Activated CD8-positive, alpha-beta T cell treated with anti-CD3 and anti-CD28 coated beads, Interleukin-2, amount 10 ng/mL, durations not matched to agents 7 days and 5 days (primary cell): ENCODE measurements at regions of chr2 and their contacts with region 1.

Region 1: GRCh38 chr2:127280693-127281092 is 13.3 kb downstream of the ERCC3 start:
- DNase-seq: no peak
- ATAC-seq: no peak
- H3K4me3 Mint-ChIP-seq: no peak overlapping the region
- H3K27ac Mint-ChIP-seq: no peak overlapping the region
- H3K4me1 Mint-ChIP-seq: peaks cover 14% of the 10 kb centered on the region
- H3K27me3 Mint-ChIP-seq: no peaks in the 10 kb centered on the region

Region 2: GRCh38 chr2:127226520-127227263 is 54.0 kb before region 1 on chr2:
- CTCF ChIA-PET with region 1: no interaction called
- POLR2A ChIA-PET with region 1: no interaction called
- DNase-seq: no peak
- ATAC-seq: peak; percentile 36
- H3K4me3 Mint-ChIP-seq: no peak overlapping the region
- H3K27ac Mint-ChIP-seq: no peak overlapping the region
- H3K4me1 Mint-ChIP-seq: no peaks in the 10 kb centered on the region
- H3K27me3 Mint-ChIP-seq: peaks cover 29% of the 10 kb centered on the region

Region 3: DNA sequence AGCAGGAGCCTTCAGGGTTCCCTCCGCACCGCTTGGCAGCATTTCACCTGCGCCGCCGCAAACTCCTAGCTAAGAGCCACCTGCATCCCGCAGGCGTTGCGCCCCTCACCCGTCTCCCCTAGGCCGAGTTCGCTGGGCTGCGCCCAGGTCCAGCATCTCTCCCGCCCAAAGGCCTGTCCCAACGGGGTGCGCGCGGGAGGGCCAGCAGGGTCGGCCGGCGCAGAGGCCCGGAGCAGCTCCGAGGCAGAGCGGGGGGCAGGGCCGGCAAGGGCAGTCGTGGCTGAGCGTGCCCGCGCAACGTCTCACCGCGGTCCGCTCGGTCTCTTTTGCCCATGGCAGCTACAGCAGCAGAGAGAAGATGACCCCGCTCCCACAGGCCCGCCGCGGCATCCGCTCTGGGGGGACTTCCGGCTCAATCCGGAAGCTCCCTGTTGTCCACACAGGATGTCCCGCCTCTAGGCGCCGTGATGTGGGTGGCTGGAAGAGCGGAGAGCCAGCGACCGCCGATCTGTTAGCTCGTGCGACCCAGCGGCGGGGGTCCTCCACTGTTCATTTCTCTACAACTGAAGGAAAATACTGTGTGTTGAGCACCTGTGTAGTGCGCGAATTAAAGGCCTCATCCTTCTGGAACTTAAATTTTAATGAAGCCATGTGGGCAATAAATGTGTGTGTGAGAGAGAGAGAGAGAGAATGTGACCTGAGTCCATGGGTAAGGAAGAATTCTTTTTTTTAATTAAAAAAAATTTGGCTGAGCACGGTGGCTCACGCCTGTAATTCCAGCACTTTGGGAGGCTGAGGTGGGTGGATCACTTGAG is 13.3 kb after region 1 on chr2 and contains the start of gene ERCC3:
- CTCF ChIA-PET with region 1: interaction called, 3 read pairs
- POLR2A ChIA-PET with region 1: interaction called, 13 read pairs
- DNase-seq: peak; percentile 90
- ATAC-seq: peak; percentile 98
- H3K4me3 Mint-ChIP-seq: peak within 1 kb of the TSS; percentile 99
- H3K27ac Mint-ChIP-seq: peak within 1 kb of the TSS; percentile 98
- H3K4me1 Mint-ChIP-seq: peaks cover 28% of the 10 kb centered on the region
- H3K27me3 Mint-ChIP-seq: no peaks in the 10 kb centered on the region
- total RNA-seq, gene ERCC3: 59.4 to 61.7 TPM

Region 4: DNA sequence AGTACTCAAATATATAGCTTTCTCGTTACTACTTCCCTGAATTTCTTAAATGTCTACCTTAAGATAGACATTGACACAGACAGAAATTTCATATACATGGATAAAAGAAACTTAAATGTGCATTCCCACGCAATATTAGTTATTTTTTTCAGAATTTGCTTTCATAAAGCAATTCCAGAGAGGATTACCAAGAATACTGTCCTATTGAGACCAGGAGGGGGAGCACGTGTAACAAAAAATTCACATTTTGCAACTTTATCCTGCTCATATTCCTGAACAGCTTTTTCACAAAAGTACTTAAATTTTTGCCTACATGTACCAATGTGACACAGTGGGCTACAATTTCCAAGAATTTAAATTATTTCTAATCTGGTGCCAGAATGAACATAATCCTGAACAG is 43.9 kb after region 1 on chr2:
- CTCF ChIA-PET with region 1: no interaction called
- POLR2A ChIA-PET with region 1: no interaction called
- DNase-seq: no peak
- ATAC-seq: no peak
- H3K4me3 Mint-ChIP-seq: no peak overlapping the region
- H3K27ac Mint-ChIP-seq: no peak overlapping the region
- H3K4me1 Mint-ChIP-seq: no peaks in the 10 kb centered on the region
- H3K27me3 Mint-ChIP-seq: no peaks in the 10 kb centered on the region

Region 5: DNA sequence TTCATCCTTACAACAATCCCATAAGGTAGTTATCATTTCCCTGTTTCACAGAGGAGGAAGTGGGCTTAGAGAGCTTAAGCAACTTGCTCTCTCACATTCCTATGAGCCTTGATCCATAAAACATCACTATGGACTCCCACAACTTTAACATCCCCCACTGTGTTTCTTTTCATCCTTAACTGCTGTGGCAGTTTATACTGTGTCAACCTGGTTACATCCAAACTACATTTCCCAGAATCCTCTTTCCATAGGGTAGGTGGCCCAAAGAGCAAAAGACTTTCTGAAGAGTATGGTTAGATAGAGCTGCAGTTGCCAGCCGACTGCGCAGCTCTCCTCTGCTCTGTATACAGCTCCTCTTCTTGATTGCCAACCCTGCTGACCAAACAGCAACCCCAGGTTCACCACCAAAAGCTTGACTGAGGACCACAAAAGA is 84.5 kb after region 1 on chr2:
- CTCF ChIA-PET with region 1: no interaction called
- POLR2A ChIA-PET with region 1: no interaction called
- DNase-seq: no peak
- ATAC-seq: peak; percentile 65
- H3K4me3 Mint-ChIP-seq: no peak overlapping the region
- H3K27ac Mint-ChIP-seq: no peak overlapping the region
- H3K4me1 Mint-ChIP-seq: peaks cover 17% of the 10 kb centered on the region
- H3K27me3 Mint-ChIP-seq: no peaks in the 10 kb centered on the region